PC-9 (cell line): ENCODE measurements at regions of chr2 and their contacts with region 1.

Region 1: GRCh38 chr2:62565309-62565908 is 59.4 kb upstream of the TMEM17 start:
- DNase-seq: no peak
- H3K4me3 ChIP-seq: no peak overlapping the region
- H3K27ac ChIP-seq: no peak overlapping the region
- H3K4me1 ChIP-seq: peaks cover 11% of the 10 kb centered on the region
- H3K27me3 ChIP-seq: no peaks in the 10 kb centered on the region
- CTCF ChIP-seq: no peak

Region 2: DNA sequence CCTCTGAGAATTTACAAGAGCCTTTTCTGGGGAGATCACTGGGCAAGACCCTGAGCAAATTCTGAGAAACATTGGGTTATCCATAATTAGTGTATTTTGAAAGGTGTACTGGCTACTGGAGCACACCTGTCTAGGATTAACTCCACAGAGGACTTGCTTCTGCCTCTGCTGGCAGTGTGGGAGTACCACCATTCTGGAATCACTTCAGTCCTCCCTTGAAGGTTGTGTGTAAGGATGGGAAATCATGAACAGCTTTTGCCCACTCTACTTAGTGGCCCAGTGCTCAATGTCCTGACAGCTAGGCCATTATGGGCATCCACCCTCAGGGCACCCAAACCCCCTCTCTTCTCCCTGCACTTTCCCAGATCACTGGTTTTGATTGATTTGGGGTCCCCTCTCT is 1507.9 kb before region 1 on chr2:
- CTCF ChIA-PET with region 1: no interaction called
- POLR2A ChIA-PET with region 1: interaction called, 17 read pairs
- intact Hi-C with region 1: no loop called
- DNase-seq: no peak
- H3K4me3 ChIP-seq: no peak overlapping the region
- H3K27ac ChIP-seq: no peak overlapping the region
- H3K4me1 ChIP-seq: no peaks in the 10 kb centered on the region
- H3K27me3 ChIP-seq: no peaks in the 10 kb centered on the region
- CTCF ChIP-seq: no peak

Region 3: DNA sequence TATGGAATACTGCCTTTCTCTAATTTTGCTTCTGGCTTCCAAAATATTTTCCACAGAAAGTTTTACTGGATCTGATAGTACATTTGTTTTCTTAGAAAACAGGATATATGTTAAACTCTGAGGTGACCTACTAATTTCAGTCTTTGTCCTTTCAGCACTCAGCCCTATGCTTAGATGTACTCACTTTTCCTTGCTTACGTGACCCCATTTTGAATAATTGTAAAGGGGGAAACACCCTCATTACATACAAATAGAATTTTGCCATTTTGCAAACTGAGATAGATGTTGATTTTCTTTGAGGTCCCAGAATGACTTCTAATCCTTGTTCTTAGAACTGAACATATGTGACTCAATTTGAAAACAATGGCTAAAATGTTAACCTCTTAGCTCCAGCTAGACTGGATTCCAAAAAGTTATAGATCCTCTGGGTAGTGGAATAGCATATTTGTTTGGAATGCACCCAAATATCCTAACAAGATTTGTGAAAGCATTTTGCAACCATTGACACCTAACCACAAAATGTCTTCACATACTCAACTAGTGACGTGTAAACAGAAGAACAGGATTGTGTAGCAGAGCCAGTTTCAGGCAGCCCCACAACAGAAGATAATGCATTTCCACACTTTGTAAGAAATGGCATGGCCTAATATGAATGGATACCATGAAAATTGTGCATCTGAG is 95.3 kb after region 1 on chr2:
- CTCF ChIA-PET with region 1: no interaction called
- POLR2A ChIA-PET with region 1: no interaction called
- intact Hi-C with region 1: no loop called
- DNase-seq: peak; percentile 51 to 97
- H3K4me3 ChIP-seq: peak overlapping the region; percentile 8; the same call in 1 of the 2 replicates
- H3K27ac ChIP-seq: peak overlapping the region; percentile 80
- H3K4me1 ChIP-seq: peaks cover 62% of the 10 kb centered on the region
- H3K27me3 ChIP-seq: no peaks in the 10 kb centered on the region
- CTCF ChIP-seq: no peak